HEK293 (cell line): ENCODE measurements at regions of chr12 and their contacts with region 1.

Region 1: DNA sequence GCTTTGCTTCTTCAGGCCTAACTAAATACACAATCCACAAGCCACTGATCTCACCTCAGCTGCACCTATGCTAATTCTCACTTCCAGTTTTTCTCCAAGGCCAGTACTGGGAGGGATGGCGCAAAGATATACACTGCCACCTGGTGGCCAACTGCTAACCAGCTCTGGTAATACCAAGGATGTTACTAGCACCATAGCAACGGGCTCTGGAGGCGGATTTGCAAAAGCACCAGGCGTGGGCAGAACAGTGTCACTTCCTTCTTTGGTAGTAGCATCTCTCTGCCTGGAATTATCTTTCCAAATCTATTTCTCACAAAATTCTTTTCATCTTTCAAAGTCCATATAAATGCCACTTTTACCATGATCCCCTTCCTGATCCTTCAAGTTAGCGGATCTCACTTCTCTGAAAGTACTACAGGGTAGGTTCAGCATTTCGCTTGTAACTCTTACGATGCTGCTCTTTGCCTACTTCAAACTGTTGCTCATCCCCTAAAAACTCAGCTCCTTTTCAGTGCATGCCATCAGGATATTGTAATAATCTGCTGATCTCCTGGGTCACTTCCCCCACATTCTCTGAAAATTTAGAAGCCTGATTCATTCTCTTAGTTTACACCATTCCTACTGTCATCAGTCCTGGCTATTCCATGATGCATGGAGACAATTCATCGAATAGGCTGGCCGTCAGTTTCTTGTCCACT is 37.1 kb upstream of the FOXJ2 start:
- H3K4me3 ChIP-seq: no peak overlapping the region
- H3K27ac ChIP-seq: no peak overlapping the region
- H3K4me1 ChIP-seq: no peaks in the 10 kb centered on the region
- CTCF ChIP-seq: peak; percentile 77

Region 2: GRCh38 chr12:7959701-7960121 is 35.7 kb before region 1 on chr12:
- CTCF ChIA-PET with region 1: interaction called, 11 read pairs
- POLR2A ChIA-PET with region 1: no interaction called
- H3K4me3 ChIP-seq: no peak overlapping the region
- H3K27ac ChIP-seq: no peak overlapping the region
- H3K4me1 ChIP-seq: no peaks in the 10 kb centered on the region
- CTCF ChIP-seq: no peak

Region 3: GRCh38 chr12:8027856-8028255 is 32.4 kb after region 1 on chr12:
- CTCF ChIA-PET with region 1: no interaction called
- POLR2A ChIA-PET with region 1: no interaction called
- H3K4me3 ChIP-seq: no peak overlapping the region
- H3K27ac ChIP-seq: no peak overlapping the region
- H3K4me1 ChIP-seq: no peaks in the 10 kb centered on the region; the same call in 1 of the 2 replicates
- CTCF ChIP-seq: no peak

Region 4: DNA sequence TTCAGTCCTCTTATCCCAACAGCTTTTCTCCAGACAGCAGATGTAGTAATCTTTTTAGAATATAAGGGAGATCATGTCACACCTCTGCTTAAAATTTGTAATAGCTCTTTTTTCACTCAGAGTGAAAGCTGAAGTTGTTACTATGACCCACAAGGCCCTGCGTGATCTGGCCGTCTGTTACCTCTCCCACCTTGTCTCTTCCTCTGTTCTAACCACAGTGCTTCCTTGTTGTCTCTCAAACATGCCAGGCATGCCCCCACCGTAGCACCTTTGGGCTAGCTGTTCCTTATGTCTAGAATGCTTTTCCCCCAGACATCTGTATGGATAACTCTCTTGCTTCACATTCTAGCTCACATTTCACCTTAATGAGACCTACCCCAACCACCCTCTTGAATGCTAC is 93.2 kb after region 1 on chr12:
- CTCF ChIA-PET with region 1: no interaction called
- POLR2A ChIA-PET with region 1: no interaction called
- H3K4me3 ChIP-seq: no peak overlapping the region
- H3K27ac ChIP-seq: no peak overlapping the region
- H3K4me1 ChIP-seq: peaks cover 2% of the 10 kb centered on the region; the same call in 1 of the 2 replicates
- CTCF ChIP-seq: no peak